MCF 10A (cell line): ENCODE measurements at regions of chr5 and their contacts with region 1.

Region 1: GRCh38 chr5:151427258-151427657 is 20.1 kb upstream of the SLC36A1 start:
- DNase-seq: no peak
- H3K4me3 Mint-ChIP-seq: no peak overlapping the region
- H3K27ac Mint-ChIP-seq: no peak overlapping the region
- H3K4me1 Mint-ChIP-seq: no peaks in the 10 kb centered on the region
- H3K27me3 Mint-ChIP-seq: peaks cover 24% of the 10 kb centered on the region
- CTCF ChIP-seq: no peak

Region 2: DNA sequence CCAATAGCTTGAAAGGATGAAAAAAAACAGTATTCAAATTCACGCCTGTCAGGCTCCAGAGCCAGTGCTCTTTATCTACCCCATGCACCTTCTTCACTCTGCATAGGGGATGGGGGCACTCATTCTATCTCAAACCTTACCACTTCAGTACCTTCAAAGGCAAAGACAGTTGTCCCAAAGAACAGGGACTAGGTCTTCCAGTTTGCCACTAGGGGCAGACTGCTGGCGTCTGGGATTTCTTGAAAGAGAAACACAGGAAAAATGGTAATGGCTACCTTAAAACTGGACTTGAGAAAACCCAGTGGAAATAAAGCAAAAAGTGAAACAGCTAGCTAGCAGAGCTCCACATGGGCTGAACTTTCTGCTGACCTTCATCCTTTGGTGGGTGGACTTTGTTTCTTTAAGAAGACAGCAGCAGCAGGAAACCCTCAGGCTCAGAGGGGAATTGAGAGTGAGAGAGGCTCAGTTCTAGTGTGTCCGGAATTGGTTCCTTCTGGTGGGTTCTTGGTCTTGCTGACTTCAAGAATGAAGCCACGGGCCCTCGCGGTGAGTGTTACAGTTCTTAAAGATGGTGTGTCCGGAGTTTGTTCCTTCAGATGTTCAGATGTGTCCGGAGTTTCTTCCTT is 20.8 kb before region 1 on chr5:
- CTCF ChIA-PET with region 1: interaction called, 14 read pairs
- POLR2A ChIA-PET with region 1: interaction called, 3 read pairs
- intact Hi-C with region 1: no loop called
- DNase-seq: peak; percentile 42
- H3K4me3 Mint-ChIP-seq: no peak overlapping the region
- H3K27ac Mint-ChIP-seq: no peak overlapping the region
- H3K4me1 Mint-ChIP-seq: no peaks in the 10 kb centered on the region
- H3K27me3 Mint-ChIP-seq: peaks cover 51% of the 10 kb centered on the region
- CTCF ChIP-seq: peak; percentile 32

Region 3: DNA sequence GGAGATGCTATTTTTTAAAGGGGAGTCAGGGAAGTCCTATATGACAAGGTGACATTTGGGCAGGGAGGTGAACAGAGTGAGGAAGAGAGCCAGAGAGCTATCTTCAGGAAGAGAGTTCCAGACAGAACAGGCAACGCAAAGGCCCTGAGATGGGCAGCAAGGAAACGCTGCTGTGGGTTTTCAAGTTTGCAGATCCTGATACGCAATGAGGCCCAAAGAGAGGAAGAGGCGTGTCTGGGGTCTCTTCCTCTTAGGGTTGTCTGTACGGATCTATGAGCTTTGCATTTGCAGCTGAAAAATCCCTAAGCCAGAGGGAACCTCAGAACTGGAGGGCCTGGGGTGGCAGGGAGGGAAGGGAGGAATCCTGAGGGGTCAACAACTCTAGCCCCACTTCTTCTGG is 150.3 kb after region 1 on chr5:
- CTCF ChIA-PET with region 1: no interaction called
- POLR2A ChIA-PET with region 1: no interaction called
- intact Hi-C with region 1: no loop called
- DNase-seq: no peak
- H3K4me3 Mint-ChIP-seq: no peak overlapping the region
- H3K27ac Mint-ChIP-seq: peak overlapping the region; percentile 30
- H3K4me1 Mint-ChIP-seq: peaks cover 39% of the 10 kb centered on the region
- H3K27me3 Mint-ChIP-seq: no peaks in the 10 kb centered on the region
- CTCF ChIP-seq: no peak